Right lobe of liver (tissue), 6 donors: ENCODE measurements at regions of chr1 and their contacts with region 1.

Region 1: DNA sequence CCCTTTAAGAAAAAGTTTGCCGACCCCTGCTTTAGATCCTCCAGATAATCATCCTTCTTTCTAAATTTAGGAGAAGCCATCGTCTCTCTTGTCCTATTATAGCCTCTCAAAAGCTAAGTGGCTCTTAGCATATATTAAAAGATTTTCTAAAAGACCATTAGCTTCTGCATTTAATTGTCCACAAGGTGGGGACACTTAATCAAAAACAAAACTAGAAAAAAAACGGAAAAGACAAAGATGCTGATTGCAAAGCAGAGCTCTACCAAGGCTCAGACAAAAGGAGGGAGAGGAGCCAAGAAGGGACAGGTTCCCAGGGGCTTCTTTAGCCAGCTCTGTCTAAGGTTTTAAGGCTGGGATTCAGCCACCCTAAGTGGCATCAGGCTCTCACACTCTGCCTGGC is 128.3 kb upstream of the HMGB4 start:
- DNase-seq: no peak
- ATAC-seq: no peak
- H3K4me3 ChIP-seq: no peak overlapping the region
- H3K27ac ChIP-seq: no peak overlapping the region
- H3K4me1 ChIP-seq: no peaks in the 10 kb centered on the region
- H3K27me3 ChIP-seq: no peaks in the 10 kb centered on the region
- CTCF ChIP-seq: peak; percentile 20 to 35 (median 30)
- POLR2A ChIP-seq: no peak

Region 2: GRCh38 chr1:34013958-34014737 is 278.5 kb after region 1 on chr1:
- intact Hi-C with region 1: loop called in 1 of 2 experiments (anchors 5 kb)
- DNase-seq: peak in 2 of 3 donors; percentile 36 to 51
- ATAC-seq: peak in 3 of 4 donors; percentile 58 to 75 (median 65)
- H3K4me3 ChIP-seq: no peak overlapping the region
- H3K27ac ChIP-seq: no peak overlapping the region
- H3K4me1 ChIP-seq: no peaks in the 10 kb centered on the region
- H3K27me3 ChIP-seq: no peaks in the 10 kb centered on the region
- CTCF ChIP-seq: peak; percentile 32 to 70 (median 46)
- POLR2A ChIP-seq: no peak